Right ventricle myocardium inferior (tissue), 1 donor: ENCODE measurements at regions of chr1 and their contacts with region 1.

Region 1: GRCh38 chr1:173970252-173970651 is 51.9 kb downstream of the RC3H1 start:
- DNase-seq: no peak
- ATAC-seq: no peak

Region 2: GRCh38 chr1:173937062-173937461 is 33.2 kb before region 1 on chr1:
- intact Hi-C with region 1: loop called (anchors 5 kb)
- DNase-seq: no peak
- ATAC-seq: no peak

Region 3: GRCh38 chr1:174074757-174075156 is 104.5 kb after region 1 on chr1:
- intact Hi-C with region 1: loop called (anchors 10 kb)
- DNase-seq: no peak
- ATAC-seq: no peak